ENCODE measurements at regions of chr7 and their contacts with region 1.

Region 1: GRCh38 chr7:44921607-44922359 is 36.5 kb upstream of the PURB start:
- DNase-seq: peak; percentile 61 to 93
- H3K4me3 ChIP-seq: no peak overlapping the region
- H3K27ac ChIP-seq: no peak overlapping the region
- H3K4me1 ChIP-seq: no peaks in the 10 kb centered on the region
- H3K27me3 ChIP-seq: no peaks in the 10 kb centered on the region
- CTCF ChIP-seq: peak; percentile 65 to 78 (median 70)

Region 2: DNA sequence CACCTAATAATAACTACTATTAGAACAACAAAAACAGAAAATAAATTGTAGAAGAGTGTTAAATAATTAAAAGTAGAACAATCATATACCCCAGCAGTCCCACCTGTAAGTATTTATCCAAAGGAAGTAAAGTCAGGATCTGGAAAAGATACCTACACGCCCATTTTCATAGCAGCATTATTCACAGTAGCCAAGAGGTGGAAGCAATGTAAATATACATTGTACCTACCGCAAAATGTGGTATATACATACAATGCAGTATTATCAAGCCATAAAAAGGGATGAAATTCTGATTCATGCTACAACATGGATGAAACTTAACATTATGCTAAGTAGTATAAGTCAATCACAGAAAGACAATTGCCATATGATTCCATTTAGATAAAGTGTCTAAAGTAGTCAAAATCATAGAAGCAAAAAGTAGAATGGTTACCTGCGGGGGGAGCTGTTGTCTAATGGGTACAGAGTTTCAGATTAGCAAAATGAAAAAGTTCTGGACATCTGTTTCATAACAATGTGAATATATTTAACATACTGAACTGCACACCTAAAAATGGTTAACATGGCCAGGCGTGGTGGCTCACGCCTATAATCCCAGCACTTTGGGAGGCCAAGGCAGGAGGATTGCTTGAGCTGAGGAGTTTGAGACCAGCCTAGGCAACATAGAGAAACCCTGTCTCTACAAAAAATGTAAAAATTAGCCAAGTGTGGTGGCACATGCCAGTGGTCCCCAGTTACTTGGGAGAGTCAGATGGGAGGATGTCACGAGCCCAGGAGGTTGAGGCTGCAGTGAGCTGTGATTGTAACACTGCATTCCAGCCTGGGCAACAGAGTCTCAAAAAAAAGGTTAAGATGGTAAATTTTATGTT is 333.7 kb before region 1 on chr7:
- intact Hi-C with region 1: loop called (anchors 2 kb)
- DNase-seq: no peak
- H3K4me3 ChIP-seq: no peak overlapping the region
- H3K27ac ChIP-seq: no peak overlapping the region
- H3K4me1 ChIP-seq: peaks cover 0 to 2% of the 10 kb centered on the region in 2 donors
- H3K27me3 ChIP-seq: no peaks in the 10 kb centered on the region
- CTCF ChIP-seq: peak; percentile 8 to 49 (median 45)

Region 3: GRCh38 chr7:44858161-44858560 is 63.6 kb before region 1 on chr7:
- intact Hi-C with region 1: loop called (anchors 1 kb)
- DNase-seq: no peak
- H3K4me3 ChIP-seq: no peak overlapping the region
- H3K27ac ChIP-seq: no peak overlapping the region
- H3K4me1 ChIP-seq: peaks cover 0 to 2% of the 10 kb centered on the region in 2 donors
- H3K27me3 ChIP-seq: no peaks in the 10 kb centered on the region
- CTCF ChIP-seq: no peak

Region 4: DNA sequence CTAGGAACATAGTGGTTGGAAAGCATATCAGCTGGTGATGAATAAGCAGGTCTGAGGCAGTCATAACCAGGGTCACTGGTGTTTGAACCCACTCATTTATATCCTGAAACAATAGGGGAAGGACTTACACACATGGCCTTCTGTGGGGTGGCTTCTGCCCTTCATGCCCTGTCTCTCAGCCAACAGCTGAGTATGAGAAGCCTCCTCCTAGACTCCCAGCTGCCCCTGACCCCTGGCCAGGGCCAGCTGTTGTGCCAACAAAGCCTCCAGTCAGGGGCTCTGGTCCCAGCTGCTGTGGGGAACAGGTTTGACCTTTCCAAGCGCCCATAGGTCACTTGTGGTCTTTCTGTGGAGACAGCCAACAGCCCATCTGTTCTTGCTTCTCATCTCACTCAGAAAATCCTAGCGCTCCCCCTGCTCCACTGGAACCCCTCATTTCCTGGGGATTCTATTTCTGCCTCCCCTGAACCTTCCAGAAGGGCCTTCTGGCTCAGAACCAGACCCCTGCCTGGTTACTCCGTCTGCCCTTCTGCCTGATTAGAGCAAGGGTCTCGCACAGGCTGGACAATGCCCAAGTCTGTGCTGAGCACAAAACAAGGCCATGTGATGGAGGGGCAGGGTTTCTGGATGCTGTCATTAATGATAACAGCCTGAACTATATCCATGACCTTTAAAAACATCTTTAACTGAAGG is 26.7 kb before region 1 on chr7:
- intact Hi-C with region 1: no loop called
- DNase-seq: no peak
- H3K4me3 ChIP-seq: no peak overlapping the region
- H3K27ac ChIP-seq: no peak overlapping the region
- H3K4me1 ChIP-seq: no peaks in the 10 kb centered on the region
- H3K27me3 ChIP-seq: no peaks in the 10 kb centered on the region
- CTCF ChIP-seq: no peak

Measured in ascending aorta (tissue), 2 donors.